Dorsolateral prefrontal cortex (tissue), 120 donors: ENCODE measurements at regions of chr7 and their contacts with region 1.

Region 1: GRCh38 chr7:141533149-141533949 is 17.9 kb upstream of the AGK start:
- DNase-seq: peak; percentile 49 to 80 (median 66)
- H3K4me3 ChIP-seq: peak overlapping the region in 15 of 59 donors; percentile 1 to 48 (median 21)
- H3K27ac ChIP-seq: peak overlapping the region in 26 of 59 donors; percentile 16 to 76 (median 50)
- H3K27me3 ChIP-seq: no peaks in the 10 kb centered on the region
- CTCF ChIP-seq: peak; percentile 85 to 99 (median 97)

Region 2: DNA sequence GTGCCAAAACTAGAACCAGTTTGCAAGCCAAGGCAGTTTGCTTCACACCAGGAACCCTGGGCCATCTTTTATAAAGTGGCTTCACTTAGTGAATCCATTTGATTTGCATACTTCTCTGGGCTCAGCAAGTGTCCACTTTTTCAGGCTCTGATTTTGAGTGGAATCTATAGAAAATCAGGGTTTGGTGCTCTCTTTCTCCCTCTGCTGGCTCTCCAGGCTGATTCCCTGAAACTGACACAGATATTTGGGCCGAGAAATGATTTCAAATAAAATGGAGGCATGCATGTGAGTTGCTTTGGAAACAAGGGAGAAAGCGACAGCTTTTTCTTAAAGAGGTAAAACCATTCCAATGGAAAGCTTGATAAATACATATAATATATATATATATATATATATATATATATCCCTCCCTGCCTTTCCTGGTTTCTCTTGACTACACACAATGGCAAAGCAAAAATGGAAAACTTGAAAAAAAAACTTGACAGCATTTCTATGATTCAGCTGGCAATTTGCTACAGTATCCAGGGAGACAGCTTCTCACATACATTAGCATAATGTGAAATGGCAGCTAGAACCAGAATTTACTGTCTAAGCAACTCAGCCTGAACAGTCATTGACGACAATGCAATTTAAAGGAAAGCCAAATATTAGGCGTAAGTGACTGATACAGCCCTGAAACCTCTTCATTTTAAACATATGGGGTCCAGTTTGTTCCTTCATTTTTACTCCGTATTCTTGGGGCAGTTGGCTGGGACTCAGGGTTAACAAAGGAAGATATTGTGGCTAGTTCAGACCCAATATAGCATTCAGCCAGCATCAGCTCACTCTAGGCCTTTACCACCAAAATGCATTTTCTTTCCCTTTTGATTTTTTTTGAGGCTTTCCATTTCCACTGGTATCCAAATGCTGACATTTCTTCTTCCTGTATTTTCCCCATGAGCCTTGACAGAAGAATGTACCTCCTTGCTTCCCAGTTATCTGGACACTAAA is 271.0 kb before region 1 on chr7:
- intact Hi-C with region 1: loop called in 1 of 2 experiments (anchors 10 kb)
- DNase-seq: peak in 2 of 10 donors; percentile 13 to 49
- H3K4me3 ChIP-seq: peak overlapping the region in 4 of 59 donors; percentile 4 to 8 (median 4)
- H3K27ac ChIP-seq: peak overlapping the region in 31 of 59 donors; percentile 0 to 64 (median 39)
- H3K27me3 ChIP-seq: no peaks in the 10 kb centered on the region
- CTCF ChIP-seq: peak in 55 of 56 donors; percentile 14 to 66 (median 49)

Region 3: DNA sequence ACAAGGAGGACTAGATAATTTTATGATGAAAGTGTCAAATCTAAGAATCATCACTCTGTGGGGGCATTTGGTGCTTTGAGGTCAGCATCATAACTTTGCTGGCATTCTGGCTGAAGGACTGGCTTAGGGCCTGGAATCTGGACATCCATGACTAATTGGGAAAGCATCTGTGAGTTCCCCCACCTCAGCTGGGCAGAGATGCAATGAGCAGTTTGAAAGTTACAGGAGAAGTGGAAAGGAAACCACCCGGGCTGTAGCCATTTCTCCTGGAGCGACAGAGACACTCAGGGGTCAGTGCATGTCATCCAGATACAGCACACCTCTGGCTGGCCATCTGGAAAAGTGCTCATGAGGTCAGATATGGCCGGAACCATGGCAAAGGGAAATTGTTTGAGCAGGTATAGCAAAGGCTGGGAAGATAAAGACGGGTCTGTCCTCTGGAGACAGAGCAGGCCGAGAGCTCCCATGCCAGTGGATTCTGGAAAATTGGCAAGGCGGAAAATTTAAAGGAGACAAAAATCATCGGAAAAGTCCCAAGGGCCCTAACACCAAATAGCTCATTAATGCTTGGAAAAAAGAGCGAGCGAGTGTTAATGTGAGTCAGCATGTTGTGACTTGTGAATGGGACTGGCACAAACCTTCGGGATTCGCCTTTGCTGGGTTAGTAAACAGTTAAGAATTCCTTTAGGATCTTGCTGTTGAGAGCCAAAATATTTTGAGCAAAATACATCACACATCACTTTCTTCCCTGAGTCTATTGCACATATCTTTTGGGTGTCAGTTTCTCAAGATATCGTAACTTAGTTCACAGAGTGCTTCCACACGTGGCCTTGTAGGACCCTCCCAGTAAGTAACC is 170.5 kb before region 1 on chr7:
- intact Hi-C with region 1: no loop called
- DNase-seq: no peak
- H3K4me3 ChIP-seq: no peak overlapping the region
- H3K27ac ChIP-seq: peak overlapping the region in 1 of 59 donors; percentile 16
- H3K27me3 ChIP-seq: no peaks in the 10 kb centered on the region
- CTCF ChIP-seq: no peak

Region 4: DNA sequence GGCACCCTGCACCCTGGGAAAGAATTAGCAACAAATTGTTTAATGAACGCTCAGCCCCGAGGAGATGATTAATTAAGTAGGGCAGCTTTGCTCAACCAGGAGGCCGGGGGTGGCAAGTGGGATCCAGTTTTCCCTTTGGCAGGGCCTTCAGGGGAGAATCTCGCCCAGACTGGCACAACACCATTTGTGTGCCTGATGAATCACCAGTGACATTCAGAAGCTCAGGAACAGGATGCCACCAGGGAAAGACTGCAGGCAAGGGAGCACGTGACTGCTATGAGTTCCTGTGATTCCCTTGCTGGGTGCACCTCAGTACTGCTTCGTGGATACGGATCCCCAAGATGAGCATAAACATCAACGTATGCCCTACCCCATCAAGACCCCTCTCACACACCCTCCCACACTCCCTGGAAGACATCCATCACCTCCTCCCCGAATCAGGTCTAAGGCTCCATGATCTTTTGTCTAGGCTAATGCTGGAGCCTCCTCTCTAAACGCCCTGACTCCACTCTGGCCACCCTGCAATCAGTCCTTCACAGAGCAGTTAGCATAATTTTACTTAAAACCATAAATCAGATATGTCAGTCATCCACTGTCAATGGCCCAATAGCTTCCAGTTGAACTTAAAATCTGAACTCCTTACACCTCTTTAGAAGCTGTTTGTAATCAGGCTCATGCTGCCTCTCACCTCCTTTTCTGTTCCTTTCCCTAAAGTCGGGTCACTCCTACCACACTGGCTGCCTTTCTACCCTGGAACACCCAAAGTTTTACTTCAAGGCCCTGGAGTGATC is 91.3 kb before region 1 on chr7:
- intact Hi-C with region 1: no loop called
- DNase-seq: peak in 8 of 10 donors; percentile 45 to 81 (median 65)
- H3K4me3 ChIP-seq: no peak overlapping the region
- H3K27ac ChIP-seq: peak overlapping the region in 43 of 59 donors; percentile 1 to 80 (median 53)
- H3K27me3 ChIP-seq: no peaks in the 10 kb centered on the region
- CTCF ChIP-seq: no peak